ENCODE measurements at regions of chr4 and their contacts with region 1.

Region 1: GRCh38 chr4:40699648-40700047 is 50.1 kb upstream of the NSUN7 start:
- DNase-seq: no peak
- ATAC-seq: peak; percentile 21; the same call in 1 of the 3 replicates
- H3K4me3 ChIP-seq: no peak overlapping the region
- H3K27ac ChIP-seq: no peak overlapping the region
- H3K4me1 ChIP-seq: peaks cover 5% of the 10 kb centered on the region
- H3K27me3 ChIP-seq: no peaks in the 10 kb centered on the region
- CTCF ChIP-seq: no peak
- EP300 ChIP-seq: no peak
- POLR2A ChIP-seq: no peak
- RAD21 ChIP-seq: no peak

Region 2: DNA sequence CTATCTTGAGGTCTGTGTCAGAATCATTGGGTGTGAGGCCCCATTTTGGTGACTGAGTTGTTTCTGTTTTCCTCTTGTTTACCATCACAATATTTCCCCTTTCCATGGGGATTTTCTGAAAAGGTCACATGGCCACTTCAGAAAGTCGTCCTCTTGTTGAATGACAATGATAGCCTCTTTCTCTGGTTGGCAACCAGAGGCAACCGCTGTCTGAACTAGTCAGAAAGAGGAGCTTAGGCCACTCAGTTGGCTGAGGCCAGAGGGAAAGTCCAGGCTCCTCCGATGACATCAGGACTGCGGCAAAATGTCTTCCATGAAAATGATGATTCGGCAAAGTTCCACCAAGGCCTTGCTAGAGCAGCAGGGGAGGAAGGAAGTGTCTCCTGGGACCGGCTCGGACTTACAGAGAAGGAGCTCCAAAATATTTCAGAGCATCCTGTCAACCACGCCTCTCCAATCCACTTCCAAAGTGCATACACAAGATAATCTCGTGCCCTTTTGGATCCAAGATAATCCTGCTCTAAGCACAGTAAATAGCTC is 50.8 kb before region 1 on chr4:
- CTCF ChIA-PET with region 1: no interaction called
- POLR2A ChIA-PET with region 1: no interaction called
- RAD21 ChIA-PET with region 1: no interaction called
- SMC1A ChIA-PET with region 1: no interaction called
- in situ Hi-C with region 1: no loop called
- intact Hi-C with region 1: no loop called
- DNase-seq: no peak
- ATAC-seq: peak; percentile 84
- H3K4me3 ChIP-seq: no peak overlapping the region
- H3K27ac ChIP-seq: 0 out of 2 replicates have a peak overlapping the region, but pooled peaks have one; percentile 2
- H3K4me1 ChIP-seq: peaks cover 17% of the 10 kb centered on the region
- H3K27me3 ChIP-seq: no peaks in the 10 kb centered on the region
- CTCF ChIP-seq: no peak
- EP300 ChIP-seq: no peak
- POLR2A ChIP-seq: no peak
- RAD21 ChIP-seq: no peak

Region 3: DNA sequence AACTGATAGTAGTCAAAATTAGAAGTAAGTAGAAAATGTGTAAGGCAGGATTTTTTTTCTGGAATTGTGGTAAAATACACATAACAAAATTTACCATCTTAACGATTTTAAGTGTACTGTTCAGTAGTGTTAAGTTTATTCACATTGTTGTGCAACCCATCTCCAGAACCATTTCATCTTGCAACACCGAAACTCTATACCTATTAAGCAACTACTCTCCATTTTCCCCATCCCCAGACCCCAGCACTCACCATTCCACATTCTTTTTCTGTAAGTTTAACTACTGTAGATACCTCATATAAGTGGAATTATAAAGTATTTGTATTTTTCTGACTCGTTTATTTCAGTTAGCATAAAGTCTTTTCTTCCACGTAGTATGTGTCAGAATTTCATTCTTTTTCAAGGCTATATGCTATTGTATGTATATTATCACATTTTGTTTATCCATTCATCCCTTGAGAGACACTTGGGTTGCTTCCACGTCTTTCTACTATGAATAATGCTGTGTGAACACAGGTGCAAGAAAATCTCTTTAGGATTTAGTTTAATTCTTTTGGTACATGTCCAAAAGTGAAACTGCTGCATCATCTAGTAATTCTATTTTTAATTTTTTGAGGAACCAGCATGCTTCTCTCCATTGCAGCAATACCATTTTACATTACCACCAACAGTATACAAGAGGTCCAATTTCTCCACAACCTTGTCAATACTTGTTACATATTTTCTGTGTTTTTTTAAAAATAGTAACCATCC is 11.0 kb after region 1 on chr4:
- CTCF ChIA-PET with region 1: interaction called, 3 read pairs
- POLR2A ChIA-PET with region 1: interaction called, 3 read pairs
- RAD21 ChIA-PET with region 1: no interaction called
- SMC1A ChIA-PET with region 1: interaction called, 11 read pairs
- in situ Hi-C with region 1: no loop called
- intact Hi-C with region 1: no loop called
- DNase-seq: no peak
- ATAC-seq: no peak
- H3K4me3 ChIP-seq: no peak overlapping the region
- H3K27ac ChIP-seq: no peak overlapping the region
- H3K4me1 ChIP-seq: peaks cover 5% of the 10 kb centered on the region; the same call in 1 of the 2 replicates
- H3K27me3 ChIP-seq: no peaks in the 10 kb centered on the region
- CTCF ChIP-seq: no peak
- EP300 ChIP-seq: no peak
- POLR2A ChIP-seq: no peak
- RAD21 ChIP-seq: no peak